Activated CD8-positive, alpha-beta T cell treated with anti-CD3 and anti-CD28 coated beads for 36 hours (primary cell): ENCODE measurements at regions of chr14 and their contacts with region 1.

Region 1: GRCh38 chr14:55446218-55446654 is 5.8 kb upstream of the TBPL2 start:
- DNase-seq: peak; percentile 72
- ATAC-seq: no peak
- H3K4me3 Mint-ChIP-seq: no peak overlapping the region
- H3K27ac Mint-ChIP-seq: no peak overlapping the region
- H3K4me1 Mint-ChIP-seq: peaks cover 1% of the 10 kb centered on the region
- H3K27me3 Mint-ChIP-seq: no peaks in the 10 kb centered on the region
- CTCF ChIP-seq: peak; percentile 85

Region 2: DNA sequence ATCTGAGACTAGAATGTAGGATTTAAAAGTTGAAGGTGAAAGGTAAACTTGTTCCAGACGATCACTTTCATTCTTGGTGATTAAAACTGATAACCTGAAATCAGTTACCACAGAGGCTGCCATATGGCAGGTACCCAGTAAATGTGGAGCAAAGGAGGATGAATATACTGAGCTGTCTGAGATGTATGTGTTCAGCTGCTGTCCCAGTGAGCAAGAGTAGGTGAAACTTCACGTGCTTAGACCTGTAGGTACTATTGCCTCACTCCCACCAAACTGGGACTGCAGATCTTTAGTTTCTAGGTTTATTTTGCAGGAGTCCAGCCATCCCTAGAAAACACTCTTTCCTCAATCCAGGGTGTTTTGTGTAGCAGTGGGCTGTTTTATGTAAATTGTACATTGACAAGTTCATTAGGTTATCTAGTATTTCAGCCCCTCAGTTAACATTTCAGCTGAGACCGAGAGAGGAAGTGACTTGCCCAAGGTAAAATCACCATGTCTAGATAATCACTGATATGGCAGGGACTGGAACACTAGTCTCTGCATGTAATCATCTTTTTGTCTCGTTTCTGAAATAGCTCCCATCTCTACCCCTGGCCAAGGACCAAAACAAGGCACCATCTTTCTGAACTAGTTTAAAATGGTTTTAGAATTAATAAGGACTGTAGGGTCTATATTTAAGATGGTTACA is 97.3 kb before region 1 on chr14:
- CTCF ChIA-PET with region 1: no interaction called
- POLR2A ChIA-PET with region 1: no interaction called
- intact Hi-C with region 1: no loop called
- DNase-seq: no peak
- ATAC-seq: no peak
- H3K4me3 Mint-ChIP-seq: no peak overlapping the region
- H3K27ac Mint-ChIP-seq: peak overlapping the region; percentile 11
- H3K4me1 Mint-ChIP-seq: peaks cover 51% of the 10 kb centered on the region
- H3K27me3 Mint-ChIP-seq: no peaks in the 10 kb centered on the region
- CTCF ChIP-seq: no peak

Region 3: DNA sequence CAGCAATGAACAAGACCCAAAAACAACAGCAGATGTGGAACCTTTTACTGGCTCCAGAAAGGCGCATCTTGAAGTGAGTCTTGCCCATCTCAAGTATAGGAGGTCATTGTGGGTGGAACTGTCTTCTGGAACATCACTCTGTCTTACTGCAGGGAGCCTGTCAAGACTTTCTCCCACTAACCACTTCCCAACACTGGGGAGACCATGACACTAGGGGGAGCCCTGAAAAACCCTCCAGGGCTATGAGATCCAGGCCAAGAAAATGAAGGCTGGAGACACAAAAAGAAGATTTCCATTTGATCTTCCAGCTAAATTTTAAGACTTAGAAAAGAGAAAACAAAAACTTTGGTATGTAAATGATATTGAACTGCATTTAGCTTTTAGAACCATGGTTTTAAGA is 21.1 kb before region 1 on chr14:
- CTCF ChIA-PET with region 1: interaction called, 66 read pairs
- POLR2A ChIA-PET with region 1: no interaction called
- intact Hi-C with region 1: no loop called
- DNase-seq: no peak
- ATAC-seq: no peak
- H3K4me3 Mint-ChIP-seq: no peak overlapping the region
- H3K27ac Mint-ChIP-seq: no peak overlapping the region
- H3K4me1 Mint-ChIP-seq: peaks cover 8% of the 10 kb centered on the region
- H3K27me3 Mint-ChIP-seq: no peaks in the 10 kb centered on the region
- CTCF ChIP-seq: no peak

Region 4: GRCh38 chr14:55430024-55430690 is 16.1 kb before region 1 on chr14:
- CTCF ChIA-PET with region 1: interaction called, 66 read pairs
- POLR2A ChIA-PET with region 1: no interaction called
- intact Hi-C with region 1: no loop called
- DNase-seq: peak; percentile 65
- ATAC-seq: peak; percentile 92
- H3K4me3 Mint-ChIP-seq: no peak overlapping the region
- H3K27ac Mint-ChIP-seq: peak overlapping the region; percentile 51
- H3K4me1 Mint-ChIP-seq: peaks cover 23% of the 10 kb centered on the region
- H3K27me3 Mint-ChIP-seq: no peaks in the 10 kb centered on the region
- CTCF ChIP-seq: peak; percentile 76

Region 5: DNA sequence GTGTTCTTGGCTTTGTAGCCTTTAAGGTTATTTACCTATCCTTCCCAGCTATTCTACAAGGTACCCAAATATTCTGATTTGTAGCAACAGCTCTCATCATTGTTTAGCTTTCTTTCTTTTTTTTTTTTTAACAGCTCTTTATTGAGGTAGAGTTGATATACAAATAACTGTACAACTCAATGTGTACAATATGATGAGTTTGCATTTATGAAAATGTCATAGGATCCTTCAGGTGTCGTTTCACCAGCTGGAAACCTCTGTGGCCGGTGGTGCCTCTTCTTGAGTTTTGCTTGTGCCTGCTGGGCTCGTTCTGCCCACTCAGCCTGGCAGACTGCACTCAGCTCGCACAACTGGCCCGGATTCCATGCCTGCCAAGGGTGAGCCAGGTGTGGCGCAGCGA is 21.1 kb after region 1 on chr14:
- CTCF ChIA-PET with region 1: interaction called, 11 read pairs
- POLR2A ChIA-PET with region 1: interaction called, 5 read pairs
- intact Hi-C with region 1: no loop called
- DNase-seq: no peak
- ATAC-seq: no peak
- H3K4me3 Mint-ChIP-seq: no peak overlapping the region
- H3K27ac Mint-ChIP-seq: no peak overlapping the region
- H3K4me1 Mint-ChIP-seq: peaks cover 2% of the 10 kb centered on the region
- H3K27me3 Mint-ChIP-seq: peaks cover 3% of the 10 kb centered on the region
- CTCF ChIP-seq: no peak

Region 6: DNA sequence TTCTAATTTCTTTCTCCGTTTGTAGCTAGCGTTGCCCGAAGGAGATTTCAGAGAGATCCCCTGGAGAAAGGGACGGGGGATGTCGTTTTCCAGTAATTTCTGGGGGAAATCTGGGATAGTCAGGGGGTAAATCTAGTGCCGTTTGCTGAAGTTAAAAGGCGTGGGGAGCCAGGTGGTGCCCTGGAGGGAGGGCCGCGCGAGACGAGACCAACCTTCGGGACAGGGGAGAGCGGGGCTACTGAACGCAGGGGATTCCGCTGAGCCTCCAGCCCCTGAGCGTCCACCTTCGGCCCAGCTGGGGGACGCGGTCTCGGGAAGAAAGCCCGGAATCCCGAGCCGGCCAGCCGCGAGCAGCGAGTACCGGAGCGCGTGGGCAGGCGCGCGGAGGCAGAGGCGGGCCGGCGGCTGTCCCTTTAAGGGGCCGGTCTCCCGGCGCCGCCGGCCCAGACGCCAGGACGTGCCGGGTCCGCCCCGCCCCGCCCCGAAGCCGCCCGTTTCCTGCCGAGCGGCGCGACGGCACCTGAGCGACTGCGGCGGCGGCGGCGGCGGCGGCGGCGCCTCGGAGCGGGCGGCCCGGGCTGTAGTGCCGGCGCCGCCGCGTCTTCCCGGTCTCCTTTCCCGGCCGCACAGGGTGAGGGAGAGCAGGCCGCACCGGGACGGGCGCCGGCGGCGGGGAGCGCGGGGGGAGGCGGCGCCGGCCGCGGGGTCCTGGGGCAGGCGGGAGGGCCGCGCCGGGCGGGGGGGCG is 133.7 kb after region 1 on chr14 and contains the start of gene KTN1:
- CTCF ChIA-PET with region 1: interaction called, 8 read pairs
- POLR2A ChIA-PET with region 1: no interaction called
- intact Hi-C with region 1: loop called (anchors 10 kb)
- DNase-seq: peak; percentile 87
- ATAC-seq: peak; percentile 91
- H3K4me3 Mint-ChIP-seq: peak within 1 kb of the TSS; percentile 91
- H3K27ac Mint-ChIP-seq: peak within 1 kb of the TSS; percentile 93
- H3K4me1 Mint-ChIP-seq: peaks cover 22% of the 10 kb centered on the region
- H3K27me3 Mint-ChIP-seq: no peaks in the 10 kb centered on the region
- CTCF ChIP-seq: no peak
- total RNA-seq, gene KTN1: 107 to 113 TPM